Heart right ventricle (tissue), 16 donors: ENCODE measurements at regions of chr16 and their contacts with region 1.

Region 1: GRCh38 chr16:74448992-74449434 is 27.7 kb upstream of the CLEC18B start:
- DNase-seq: peak; percentile 37 to 89
- ATAC-seq: peak; percentile 91 to 98 (median 96)
- H3K4me3 ChIP-seq: peak overlapping the region in 1 of 10 donors; percentile 19
- H3K27ac ChIP-seq: peak overlapping the region; percentile 72 to 91 (median 81)
- H3K4me1 ChIP-seq: peaks cover 8 to 52% (median 34%) of the 10 kb centered on the region in 9 donors
- H3K27me3 ChIP-seq: no peaks in the 10 kb centered on the region
- CTCF ChIP-seq: no peak

Region 2: GRCh38 chr16:74372953-74373846 is 75.8 kb before region 1 on chr16:
- intact Hi-C with region 1: loop called in 1 of 10 experiments (anchors 10 kb)
- DNase-seq: no peak
- ATAC-seq: no peak
- H3K4me3 ChIP-seq: no peak overlapping the region
- H3K27ac ChIP-seq: no peak overlapping the region
- H3K4me1 ChIP-seq: peaks cover 0 to 7% (median 0%) of the 10 kb centered on the region in 9 donors
- H3K27me3 ChIP-seq: no peaks in the 10 kb centered on the region
- CTCF ChIP-seq: no peak